ENCODE measurements at regions of chr7 and their contacts with region 1.

Region 1: DNA sequence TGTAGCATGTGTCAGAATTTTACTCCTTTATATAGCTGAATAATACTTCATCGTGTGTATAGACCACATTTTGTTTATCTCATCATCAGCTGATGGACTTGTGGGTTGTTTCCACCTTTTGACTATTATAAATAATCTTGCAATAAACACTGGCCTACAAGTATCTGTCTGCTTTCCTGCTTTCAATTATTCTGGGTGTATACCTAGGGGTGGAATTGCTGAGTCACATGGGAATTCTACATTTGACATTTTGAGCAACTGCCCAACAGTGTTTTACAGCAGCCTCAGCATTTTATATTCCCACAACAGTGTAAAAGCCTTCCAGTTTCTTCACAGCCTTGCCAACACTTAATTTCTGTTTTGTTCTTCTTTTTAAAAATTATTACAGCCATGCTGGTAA is 200.3 kb upstream of the PRSS1 start:
- DNase-seq: no peak
- ATAC-seq: no peak
- H3K4me3 ChIP-seq: no peak overlapping the region
- H3K4me3 Mint-ChIP-seq: no peak overlapping the region
- H3K27ac ChIP-seq: no peak overlapping the region
- H3K27ac Mint-ChIP-seq: no peak overlapping the region
- H3K4me1 ChIP-seq: no peaks in the 10 kb centered on the region
- H3K4me1 Mint-ChIP-seq: no peaks in the 10 kb centered on the region
- H3K27me3 ChIP-seq: no peaks in the 10 kb centered on the region
- H3K27me3 Mint-ChIP-seq: peaks cover 29% of the 10 kb centered on the region
- CTCF ChIP-seq: no peak

Region 2: GRCh38 chr7:142272841-142273240 is 276.1 kb before region 1 on chr7:
- CTCF ChIA-PET with region 1: no interaction called
- POLR2A ChIA-PET with region 1: no interaction called
- intact Hi-C with region 1: no loop called
- DNase-seq: no peak
- ATAC-seq: no peak
- H3K4me3 ChIP-seq: no peak overlapping the region
- H3K4me3 Mint-ChIP-seq: no peak overlapping the region
- H3K27ac ChIP-seq: no peak overlapping the region
- H3K27ac Mint-ChIP-seq: no peak overlapping the region
- H3K4me1 ChIP-seq: no peaks in the 10 kb centered on the region
- H3K4me1 Mint-ChIP-seq: no peaks in the 10 kb centered on the region
- H3K27me3 ChIP-seq: no peaks in the 10 kb centered on the region
- H3K27me3 Mint-ChIP-seq: no peaks in the 10 kb centered on the region
- CTCF ChIP-seq: no peak

Region 3: GRCh38 chr7:142535123-142535779 is 13.7 kb before region 1 on chr7:
- CTCF ChIA-PET with region 1: interaction called, 13 read pairs
- POLR2A ChIA-PET with region 1: no interaction called
- intact Hi-C with region 1: no loop called
- DNase-seq: peak; percentile 51
- ATAC-seq: peak; percentile 75
- H3K4me3 ChIP-seq: peak overlapping the region in 2 of 5 experiments; percentile 13 to 18
- H3K4me3 Mint-ChIP-seq: peak overlapping the region; percentile 46
- H3K27ac ChIP-seq: no peak overlapping the region
- H3K27ac Mint-ChIP-seq: no peak overlapping the region
- H3K4me1 ChIP-seq: peaks cover 6 to 12% of the 10 kb centered on the region in 2 donors
- H3K4me1 Mint-ChIP-seq: peaks cover 11% of the 10 kb centered on the region
- H3K27me3 ChIP-seq: no peaks in the 10 kb centered on the region
- H3K27me3 Mint-ChIP-seq: peaks cover 15% of the 10 kb centered on the region
- CTCF ChIP-seq: peak; percentile 72

Region 4: DNA sequence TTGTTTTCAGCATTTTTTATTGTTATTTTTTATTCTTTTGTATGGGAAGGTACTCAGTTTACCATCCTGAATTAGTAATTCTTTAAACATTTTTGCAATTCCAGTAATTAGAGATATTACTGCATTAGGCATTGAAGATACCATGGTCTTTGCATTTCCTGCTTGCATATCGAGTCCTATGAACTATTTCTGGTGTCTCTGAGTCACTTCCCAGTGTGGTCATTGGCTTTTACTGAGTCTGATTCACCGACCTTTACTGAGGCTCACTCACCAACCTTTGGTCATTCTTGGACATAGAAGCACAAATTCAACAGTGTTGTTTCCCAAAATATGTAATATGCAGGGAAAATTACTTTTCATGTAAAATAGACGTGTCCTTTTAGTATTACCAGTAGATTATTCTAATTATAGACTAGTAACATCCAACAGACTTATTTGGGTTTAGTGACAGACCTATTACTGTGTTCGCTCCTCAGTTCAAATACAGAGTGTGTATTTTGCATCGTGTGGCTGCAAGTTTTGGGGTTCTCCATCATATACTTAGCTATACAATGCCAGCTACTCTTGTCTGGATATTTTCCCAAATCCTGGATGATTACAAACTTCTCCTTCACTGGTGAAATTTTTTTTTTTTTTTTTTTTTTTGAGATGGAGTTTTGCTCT is 19.6 kb after region 1 on chr7:
- CTCF ChIA-PET with region 1: no interaction called
- POLR2A ChIA-PET with region 1: no interaction called
- intact Hi-C with region 1: no loop called
- DNase-seq: no peak
- ATAC-seq: no peak
- H3K4me3 ChIP-seq: no peak overlapping the region
- H3K4me3 Mint-ChIP-seq: no peak overlapping the region
- H3K27ac ChIP-seq: no peak overlapping the region
- H3K27ac Mint-ChIP-seq: no peak overlapping the region
- H3K4me1 ChIP-seq: peaks cover 0 to 4% of the 10 kb centered on the region in 2 donors
- H3K4me1 Mint-ChIP-seq: no peaks in the 10 kb centered on the region
- H3K27me3 ChIP-seq: peaks cover 0 to 10% (median 3%) of the 10 kb centered on the region in 4 experiments
- H3K27me3 Mint-ChIP-seq: peaks cover 68% of the 10 kb centered on the region
- CTCF ChIP-seq: no peak